ENCODE measurements at regions of chr19 and their contacts with region 1.

Region 1: GRCh38 chr19:42244347-42245220 is 2.2 kb upstream of the GSK3A start:
- DNase-seq: no peak
- H3K4me3 ChIP-seq: peak overlapping the region; percentile 85
- CTCF ChIP-seq: peak; percentile 58

Region 2: DNA sequence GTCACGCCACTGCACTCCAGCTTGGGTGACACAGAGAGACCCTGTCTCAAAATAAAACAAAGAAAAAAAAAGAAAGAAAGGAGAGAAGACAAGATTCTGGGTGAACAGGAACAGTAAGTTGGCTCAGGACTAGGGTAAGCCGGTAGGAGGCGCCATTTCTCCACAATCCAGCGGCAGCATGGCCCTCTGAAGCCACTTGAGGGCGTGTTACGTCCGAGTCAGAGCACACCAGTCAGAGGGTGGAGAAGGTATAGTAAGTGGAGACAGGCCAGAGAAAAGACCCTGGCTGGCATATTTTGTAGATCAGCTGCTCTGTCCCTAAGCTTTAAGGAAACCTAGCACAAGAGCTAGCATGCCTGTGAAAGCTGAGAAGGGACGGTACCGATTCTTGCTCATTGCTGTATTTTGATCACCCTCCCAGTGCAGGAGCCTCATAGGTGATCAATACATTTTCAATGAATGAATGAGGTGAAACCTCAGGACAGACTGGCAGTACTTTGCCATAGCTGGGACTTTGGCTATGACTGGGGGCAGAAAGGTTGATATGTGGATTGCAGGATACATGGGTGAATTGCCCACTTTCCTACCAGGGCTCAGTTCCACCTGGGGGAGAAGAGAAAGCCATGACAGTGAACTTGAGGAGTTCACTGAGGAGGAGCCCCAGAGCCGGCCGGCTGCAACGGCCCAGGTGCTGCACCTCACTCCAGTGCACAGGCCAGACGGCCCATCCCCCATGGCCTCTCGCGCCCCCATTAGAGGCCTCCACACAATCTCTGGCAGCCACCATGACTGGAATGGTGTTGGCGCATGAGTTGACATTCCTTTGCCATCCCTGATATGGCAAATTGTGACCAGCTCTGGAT is 135.8 kb before region 1 on chr19:
- CTCF ChIA-PET with region 1: interaction called, 146 read pairs
- POLR2A ChIA-PET with region 1: interaction called, 8 read pairs
- DNase-seq: peak; percentile 56
- H3K4me3 ChIP-seq: no peak overlapping the region
- CTCF ChIP-seq: peak; percentile 100

Region 3: GRCh38 chr19:42132851-42133528 is 111.6 kb before region 1 on chr19:
- CTCF ChIA-PET with region 1: interaction called, 30 read pairs
- POLR2A ChIA-PET with region 1: no interaction called
- DNase-seq: no peak
- H3K4me3 ChIP-seq: peak overlapping the region; percentile 62
- CTCF ChIP-seq: peak; percentile 95

Region 4: DNA sequence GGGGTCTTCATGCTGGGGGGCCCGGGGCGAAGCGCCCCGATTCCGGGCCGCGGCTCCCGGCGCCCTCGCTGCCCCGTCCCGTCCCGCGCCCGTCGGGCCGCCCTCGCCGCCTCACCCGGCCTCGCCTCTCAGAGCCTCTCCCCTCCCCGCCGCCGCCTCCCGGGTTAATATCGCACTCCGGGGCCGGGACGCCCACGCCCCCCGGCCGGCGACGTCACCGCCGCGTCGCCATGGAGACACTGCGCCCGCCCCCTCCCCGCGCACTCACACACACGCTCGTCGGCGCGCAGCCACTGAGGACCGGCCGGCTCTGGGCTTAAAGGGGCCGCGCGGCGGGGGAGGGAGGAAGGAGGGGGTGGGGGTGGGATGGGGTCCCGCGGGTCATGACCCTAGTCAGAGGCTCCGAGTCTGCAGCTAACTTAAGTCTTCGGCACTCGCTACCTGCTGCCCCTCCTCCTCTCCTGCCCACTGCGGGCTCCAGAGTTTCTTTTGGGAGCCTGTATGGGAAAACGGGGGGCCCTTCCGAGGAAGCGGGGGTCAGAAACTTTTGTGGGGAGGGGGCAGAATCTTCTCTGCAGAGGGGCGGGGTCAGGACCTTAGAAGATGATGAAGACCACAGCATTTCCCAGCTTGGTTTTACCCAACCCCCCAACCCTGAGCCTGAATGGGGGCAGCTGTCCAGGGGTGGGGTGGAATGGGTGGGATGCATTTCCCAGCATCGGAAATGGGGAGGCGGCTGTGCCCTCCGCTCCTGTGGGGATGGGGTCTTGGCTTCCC is 10.6 kb after region 1 on chr19 and contains the start of gene ERF:
- CTCF ChIA-PET with region 1: interaction called, 21 read pairs
- POLR2A ChIA-PET with region 1: interaction called, 4 read pairs
- DNase-seq: no peak
- H3K4me3 ChIP-seq: peak within 1 kb of the TSS; percentile 96
- CTCF ChIP-seq: no peak

Region 5: DNA sequence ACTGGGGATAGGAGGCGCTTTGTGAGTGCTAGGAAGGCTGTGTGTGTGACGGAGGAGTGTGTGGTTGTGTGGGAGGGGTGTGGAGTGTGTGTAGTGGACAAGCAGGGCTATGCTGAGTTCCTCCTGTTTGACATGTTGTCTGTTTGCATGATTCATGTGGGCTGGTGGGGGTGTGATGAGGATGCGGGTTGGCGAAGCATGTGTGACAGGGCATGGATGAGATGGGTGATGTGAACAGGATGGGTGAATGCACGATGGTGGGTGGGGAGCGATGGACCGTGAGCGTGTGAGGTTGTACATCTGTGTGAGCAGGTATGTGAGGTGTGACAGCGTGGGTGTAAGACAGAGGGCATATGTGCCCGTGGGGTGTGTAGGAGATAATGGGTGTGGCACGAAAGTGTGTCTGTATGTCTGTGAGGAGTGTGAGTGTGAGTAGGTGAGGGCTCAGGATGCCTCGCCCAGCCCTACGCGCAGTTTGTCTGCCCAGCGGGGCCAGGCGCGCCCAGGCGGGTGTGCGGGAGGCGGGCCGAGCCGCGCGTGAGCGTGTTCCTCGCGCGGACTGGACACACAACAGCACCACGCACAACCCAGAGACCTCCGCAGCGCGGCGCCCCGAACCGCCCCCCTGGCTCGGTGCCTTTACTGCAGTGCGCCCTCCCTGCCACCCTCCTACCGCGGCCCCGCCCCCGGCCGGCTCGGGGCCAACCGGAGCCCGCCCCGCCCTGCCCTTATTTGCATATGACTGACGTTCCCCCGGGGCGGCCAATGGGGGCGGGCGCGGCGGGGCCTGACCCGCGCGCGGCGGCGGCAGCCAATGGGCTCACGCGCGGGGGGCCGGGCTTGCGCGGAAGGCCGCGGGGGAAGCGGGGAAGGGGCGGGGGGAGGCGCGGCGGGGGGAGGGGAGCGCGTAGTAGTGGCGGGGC is 38.8 kb after region 1 on chr19:
- CTCF ChIA-PET with region 1: interaction called, 258 read pairs
- POLR2A ChIA-PET with region 1: interaction called, 17 read pairs
- DNase-seq: no peak
- H3K4me3 ChIP-seq: peak overlapping the region; percentile 69
- CTCF ChIP-seq: no peak

Region 6: GRCh38 chr19:42325896-42326771 is 81.5 kb after region 1 on chr19:
- CTCF ChIA-PET with region 1: interaction called, 53 read pairs
- POLR2A ChIA-PET with region 1: interaction called, 3 read pairs
- DNase-seq: no peak
- H3K4me3 ChIP-seq: peak overlapping the region; percentile 88
- CTCF ChIP-seq: no peak

Region 7: GRCh38 chr19:42401365-42402303 is 157.1 kb after region 1 on chr19:
- CTCF ChIA-PET with region 1: interaction called, 21 read pairs
- POLR2A ChIA-PET with region 1: no interaction called
- DNase-seq: no peak
- H3K4me3 ChIP-seq: peak overlapping the region; percentile 61
- CTCF ChIP-seq: peak; percentile 74